ENCODE measurements at regions of chr7 and their contacts with region 1.

Region 1: DNA sequence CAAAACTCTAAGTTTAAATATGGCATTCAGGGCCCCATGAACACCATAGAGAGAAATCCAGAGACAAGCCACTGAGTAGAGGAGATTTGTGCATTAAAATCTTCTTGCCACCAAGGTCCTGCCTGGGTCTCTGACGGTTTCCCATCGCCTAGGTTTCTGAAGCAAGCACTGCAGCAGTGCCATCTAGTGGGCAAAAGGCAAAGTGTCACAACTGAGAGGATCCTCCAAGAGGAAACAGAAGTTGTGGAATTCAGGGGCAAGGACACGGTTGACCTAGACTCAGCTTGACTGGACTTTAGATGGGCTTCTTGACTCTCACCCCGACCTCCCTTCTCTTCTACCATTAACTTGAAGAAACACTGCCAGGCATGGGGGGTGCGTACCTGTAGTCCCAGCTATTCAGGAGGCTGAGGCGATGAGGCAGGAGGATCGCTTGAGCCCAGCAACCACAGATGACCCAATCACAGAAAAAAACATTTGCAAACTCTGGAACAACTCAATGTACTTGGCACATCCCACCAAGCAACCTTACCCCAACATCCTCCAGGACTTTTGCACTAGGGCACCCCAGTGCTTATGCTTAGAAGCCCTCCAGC is 604.1 kb downstream of the GALNT17 start:
- DNase-seq: peak; percentile 66
- ATAC-seq: peak; percentile 73
- H3K4me3 ChIP-seq: no peak overlapping the region
- H3K27ac ChIP-seq: no peak overlapping the region
- H3K4me1 ChIP-seq: no peaks in the 10 kb centered on the region
- H3K27me3 ChIP-seq: no peaks in the 10 kb centered on the region
- CTCF ChIP-seq: peak; percentile 82

Region 2: DNA sequence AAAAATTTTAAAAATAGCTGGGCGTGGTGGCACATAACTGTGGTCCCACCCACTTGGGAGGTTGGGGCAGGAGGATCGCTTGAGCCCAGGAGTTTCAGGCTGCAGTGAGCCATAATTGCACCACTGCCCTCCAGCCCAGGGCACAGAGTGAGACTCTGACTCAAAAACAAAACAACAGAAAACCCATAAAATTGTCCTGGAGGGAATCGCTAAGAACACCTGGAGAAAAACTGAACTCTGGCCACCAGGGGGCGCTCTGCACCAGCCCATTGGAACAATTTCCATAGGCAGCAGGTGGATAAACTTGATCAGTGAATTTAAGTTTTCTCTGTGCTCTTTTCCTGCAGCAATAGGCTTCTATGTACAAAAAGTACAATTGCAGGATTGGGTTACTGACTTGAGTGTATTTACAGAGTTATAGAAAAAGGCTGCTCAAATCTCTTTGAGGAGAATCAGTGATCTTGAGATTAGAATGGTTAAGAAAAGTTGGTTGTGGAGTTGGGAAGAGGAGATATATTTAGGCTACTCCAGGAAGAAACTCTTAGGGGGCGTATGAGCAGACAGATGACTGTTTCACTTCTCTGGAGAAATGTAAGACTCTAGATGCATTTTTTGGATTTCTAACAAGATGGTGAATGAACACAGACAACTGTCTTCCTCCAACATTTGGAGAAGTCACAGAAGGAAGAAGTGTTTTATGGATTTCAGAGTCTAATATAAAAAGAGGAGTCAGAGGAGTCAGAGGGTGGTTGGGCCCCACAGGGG is 879.0 kb before region 1 on chr7:
- CTCF ChIA-PET with region 1: no interaction called
- POLR2A ChIA-PET with region 1: no interaction called
- intact Hi-C with region 1: loop called (anchors 1 kb)
- DNase-seq: peak; percentile 63
- ATAC-seq: no peak
- H3K4me3 ChIP-seq: no peak overlapping the region
- H3K27ac ChIP-seq: no peak overlapping the region
- H3K4me1 ChIP-seq: no peaks in the 10 kb centered on the region
- H3K27me3 ChIP-seq: no peaks in the 10 kb centered on the region
- CTCF ChIP-seq: peak; percentile 77

Region 3: DNA sequence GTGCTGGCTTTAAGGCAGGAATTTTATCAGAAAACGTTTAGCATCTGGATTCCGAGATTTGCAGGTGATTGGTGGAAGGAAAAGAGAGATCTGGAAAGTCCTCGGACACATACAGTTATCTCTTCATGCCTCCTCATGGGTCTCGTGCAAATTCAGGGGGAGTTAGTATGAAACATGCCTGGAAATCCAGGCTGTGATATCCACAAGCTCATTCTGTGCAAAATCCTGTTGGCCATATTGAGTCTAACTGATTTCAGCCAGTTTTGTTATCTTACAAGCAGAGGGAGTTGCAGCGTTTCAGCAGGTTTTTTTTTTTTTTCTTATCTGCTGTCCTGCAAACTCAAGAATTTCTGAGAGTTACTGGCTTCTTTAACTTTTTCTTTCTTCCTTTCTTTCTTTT is 192.7 kb before region 1 on chr7:
- CTCF ChIA-PET with region 1: no interaction called
- POLR2A ChIA-PET with region 1: no interaction called
- intact Hi-C with region 1: no loop called
- DNase-seq: no peak
- ATAC-seq: no peak
- H3K4me3 ChIP-seq: no peak overlapping the region
- H3K27ac ChIP-seq: no peak overlapping the region
- H3K4me1 ChIP-seq: no peaks in the 10 kb centered on the region
- H3K27me3 ChIP-seq: no peaks in the 10 kb centered on the region
- CTCF ChIP-seq: no peak

Region 4: DNA sequence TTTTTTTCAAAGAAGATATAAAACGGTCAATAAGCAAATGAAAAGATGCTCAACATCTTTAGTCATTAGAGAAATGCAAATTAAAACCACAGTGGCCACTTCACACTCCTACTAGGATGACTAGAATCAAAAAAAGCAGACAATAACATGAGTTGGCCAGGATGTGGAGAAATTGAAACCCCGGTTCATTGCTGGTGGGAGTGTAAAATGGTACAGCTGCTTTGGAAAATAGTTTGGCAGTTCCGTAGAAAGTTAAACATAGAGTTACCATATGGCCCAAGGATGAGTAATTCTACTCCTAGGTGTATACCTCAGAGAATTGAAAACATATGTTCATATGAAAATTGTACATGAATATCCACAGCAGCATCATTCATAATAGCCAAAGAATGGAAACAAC is 30.8 kb before region 1 on chr7:
- CTCF ChIA-PET with region 1: no interaction called
- POLR2A ChIA-PET with region 1: no interaction called
- intact Hi-C with region 1: no loop called
- DNase-seq: no peak
- ATAC-seq: no peak
- H3K4me3 ChIP-seq: no peak overlapping the region
- H3K27ac ChIP-seq: no peak overlapping the region
- H3K4me1 ChIP-seq: no peaks in the 10 kb centered on the region
- H3K27me3 ChIP-seq: no peaks in the 10 kb centered on the region
- CTCF ChIP-seq: no peak

Region 5: GRCh38 chr7:71787513-71787912 is 51.5 kb after region 1 on chr7:
- CTCF ChIA-PET with region 1: no interaction called
- POLR2A ChIA-PET with region 1: no interaction called
- intact Hi-C with region 1: no loop called
- DNase-seq: no peak
- ATAC-seq: no peak
- H3K4me3 ChIP-seq: no peak overlapping the region
- H3K27ac ChIP-seq: no peak overlapping the region
- H3K4me1 ChIP-seq: no peaks in the 10 kb centered on the region
- H3K27me3 ChIP-seq: no peaks in the 10 kb centered on the region
- CTCF ChIP-seq: no peak